PC-9 (cell line): ENCODE measurements at regions of chr20 and their contacts with region 1.

Region 1: DNA sequence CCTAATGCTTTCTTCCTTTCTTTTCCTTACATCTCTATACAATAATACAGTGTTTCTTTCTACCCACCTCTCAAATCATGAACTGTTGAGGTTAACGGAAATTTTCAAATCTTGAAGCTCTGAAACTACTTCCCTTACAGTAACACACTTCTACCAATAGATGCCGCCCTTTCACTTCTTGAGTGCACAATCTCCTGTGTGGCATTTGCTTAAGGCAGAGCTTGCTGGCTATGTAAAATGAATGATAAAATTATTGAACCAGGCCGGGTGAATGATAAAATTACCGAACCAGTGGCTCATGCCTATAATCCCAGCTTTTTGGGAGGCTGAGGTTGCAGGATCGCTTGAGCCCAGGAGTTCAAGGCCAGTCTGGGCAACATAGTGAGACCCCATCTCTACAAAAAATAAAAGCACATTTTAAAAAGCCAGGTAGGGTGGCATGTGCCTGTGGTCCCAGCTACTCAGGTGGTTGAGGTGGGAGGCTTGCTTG is 56.8 kb downstream of the KCNS1 start:
- DNase-seq: peak; percentile 37 to 77
- H3K4me3 ChIP-seq: no peak overlapping the region
- H3K27ac ChIP-seq: no peak overlapping the region
- H3K4me1 ChIP-seq: peaks cover 26% of the 10 kb centered on the region
- H3K27me3 ChIP-seq: no peaks in the 10 kb centered on the region
- CTCF ChIP-seq: peak; percentile 96

Region 2: GRCh38 chr20:44720617-44720993 is 323.5 kb before region 1 on chr20:
- CTCF ChIA-PET with region 1: no interaction called
- POLR2A ChIA-PET with region 1: interaction called, 25 read pairs
- intact Hi-C with region 1: no loop called
- DNase-seq: peak; percentile 71 to 83
- H3K4me3 ChIP-seq: no peak overlapping the region
- H3K27ac ChIP-seq: peak overlapping the region; percentile 40
- H3K4me1 ChIP-seq: peaks cover 22% of the 10 kb centered on the region
- H3K27me3 ChIP-seq: no peaks in the 10 kb centered on the region
- CTCF ChIP-seq: no peak

Region 3: GRCh38 chr20:44997171-44998067 is 46.7 kb before region 1 on chr20:
- CTCF ChIA-PET with region 1: no interaction called
- POLR2A ChIA-PET with region 1: no interaction called
- intact Hi-C with region 1: no loop called
- DNase-seq: no peak
- H3K4me3 ChIP-seq: no peak overlapping the region
- H3K27ac ChIP-seq: no peak overlapping the region
- H3K4me1 ChIP-seq: peaks cover 12% of the 10 kb centered on the region; the same call in 1 of the 2 replicates
- H3K27me3 ChIP-seq: no peaks in the 10 kb centered on the region
- CTCF ChIP-seq: no peak

Region 4: DNA sequence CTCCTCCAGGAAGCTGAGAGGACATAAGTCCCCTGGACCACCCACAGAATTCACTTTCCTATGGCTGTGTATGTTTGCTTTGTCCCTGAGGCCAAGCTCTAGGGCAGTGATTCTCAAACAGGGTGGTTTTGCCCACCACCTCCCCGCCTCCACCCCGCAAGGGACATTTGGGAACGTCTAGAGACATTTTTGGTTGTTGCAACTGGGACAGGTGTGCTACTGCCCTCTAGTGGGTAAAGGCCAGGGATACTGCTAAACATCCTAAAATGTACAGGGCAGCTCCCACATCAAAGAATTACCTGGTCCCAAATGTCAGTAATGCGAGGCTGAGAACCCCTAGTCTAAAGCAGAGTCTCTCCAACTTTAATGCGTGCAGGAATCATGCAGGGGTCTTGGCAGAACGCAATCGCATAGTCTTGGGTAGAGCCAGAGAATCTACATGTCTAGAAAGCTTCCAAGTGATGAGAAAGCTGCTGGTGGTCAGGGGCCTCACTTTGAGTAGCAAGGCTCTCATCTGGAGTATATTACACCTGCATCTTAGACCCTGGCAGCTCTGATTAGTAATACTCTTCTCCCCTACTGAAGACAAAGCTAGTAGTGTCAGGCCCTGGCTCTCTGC is 51.7 kb after region 1 on chr20:
- CTCF ChIA-PET with region 1: interaction called, 31 read pairs
- POLR2A ChIA-PET with region 1: no interaction called
- intact Hi-C with region 1: loop called (anchors 1 kb)
- DNase-seq: peak; percentile 54 to 65
- H3K4me3 ChIP-seq: no peak overlapping the region
- H3K27ac ChIP-seq: no peak overlapping the region
- H3K4me1 ChIP-seq: no peaks in the 10 kb centered on the region
- H3K27me3 ChIP-seq: no peaks in the 10 kb centered on the region
- CTCF ChIP-seq: peak; percentile 91

Region 5: DNA sequence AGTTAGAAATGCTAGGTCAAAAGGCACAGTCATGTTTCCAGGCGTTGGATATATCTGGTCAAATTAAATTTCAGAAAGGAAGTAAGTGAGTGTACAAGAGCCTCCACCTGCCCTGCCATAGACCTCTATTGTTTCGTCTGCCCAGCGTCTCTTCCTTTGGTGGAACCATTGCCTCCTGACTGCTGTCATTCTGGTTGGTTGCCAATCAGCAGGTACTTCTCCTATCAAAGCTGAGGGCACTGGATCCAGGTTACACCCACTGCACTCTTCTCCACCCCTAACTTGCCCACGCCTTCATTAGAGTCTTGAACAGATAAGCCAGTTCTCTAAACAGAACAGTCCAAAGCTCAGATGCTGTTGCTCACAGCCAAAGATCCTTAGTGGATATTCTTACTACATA is 73.5 kb after region 1 on chr20:
- CTCF ChIA-PET with region 1: no interaction called
- POLR2A ChIA-PET with region 1: no interaction called
- intact Hi-C with region 1: no loop called
- DNase-seq: no peak
- H3K4me3 ChIP-seq: no peak overlapping the region
- H3K27ac ChIP-seq: no peak overlapping the region
- H3K4me1 ChIP-seq: no peaks in the 10 kb centered on the region
- H3K27me3 ChIP-seq: no peaks in the 10 kb centered on the region
- CTCF ChIP-seq: no peak

Region 6: DNA sequence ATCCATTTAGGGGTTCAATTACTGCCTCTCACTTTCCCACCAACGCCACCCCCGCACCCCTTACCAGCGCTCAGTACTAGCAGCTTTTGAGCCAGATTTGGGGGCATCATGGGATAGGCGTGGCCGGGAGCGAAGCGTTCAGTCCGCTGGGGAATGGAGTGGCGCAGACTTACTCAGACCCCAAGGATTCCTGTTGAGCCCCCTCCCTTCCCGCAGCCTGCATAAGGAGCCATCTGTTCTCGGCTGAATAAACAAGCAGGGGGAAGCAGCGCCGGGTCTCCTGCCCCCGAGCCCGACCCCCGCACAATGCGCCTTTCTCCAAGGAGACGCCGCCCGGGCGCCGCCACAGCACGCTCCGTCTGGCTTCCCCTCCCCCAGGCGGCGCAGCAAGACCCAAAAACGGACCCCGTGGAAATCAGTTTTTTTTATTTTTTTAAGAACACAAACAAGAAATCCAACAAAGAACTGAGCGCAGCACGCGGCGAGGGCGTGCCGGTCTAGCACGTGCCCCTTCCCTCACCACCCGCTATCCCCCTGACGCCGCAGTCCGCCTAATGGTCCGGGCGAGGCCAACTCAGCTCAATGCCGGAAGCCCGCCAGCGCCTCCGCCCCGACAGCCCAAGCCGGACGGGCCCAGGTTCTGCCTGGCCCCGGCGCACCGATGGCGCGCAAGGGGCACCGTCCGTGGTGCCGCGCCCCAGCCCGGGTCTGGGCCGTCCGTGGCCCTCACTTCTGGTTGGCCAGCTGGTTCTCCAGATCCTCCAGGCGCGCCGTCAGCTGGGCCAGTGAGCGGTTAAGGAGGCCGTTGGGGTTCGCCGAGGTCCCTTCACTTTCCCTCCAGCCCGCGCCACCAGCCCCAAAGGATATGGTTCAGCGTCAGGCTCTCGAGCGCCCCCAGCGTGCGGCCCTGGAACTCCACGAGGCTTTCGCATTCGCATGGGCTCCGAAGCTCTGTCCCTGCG is 249.2 kb after region 1 on chr20:
- CTCF ChIA-PET with region 1: interaction called, 19 read pairs
- POLR2A ChIA-PET with region 1: interaction called, 4 read pairs
- intact Hi-C with region 1: loop called (anchors 1 kb)
- DNase-seq: peak; percentile 61 to 91
- H3K4me3 ChIP-seq: peak overlapping the region; percentile 60
- H3K27ac ChIP-seq: no peak overlapping the region
- H3K4me1 ChIP-seq: peaks cover 15% of the 10 kb centered on the region
- H3K27me3 ChIP-seq: no peaks in the 10 kb centered on the region
- CTCF ChIP-seq: peak; percentile 97

Region 7: DNA sequence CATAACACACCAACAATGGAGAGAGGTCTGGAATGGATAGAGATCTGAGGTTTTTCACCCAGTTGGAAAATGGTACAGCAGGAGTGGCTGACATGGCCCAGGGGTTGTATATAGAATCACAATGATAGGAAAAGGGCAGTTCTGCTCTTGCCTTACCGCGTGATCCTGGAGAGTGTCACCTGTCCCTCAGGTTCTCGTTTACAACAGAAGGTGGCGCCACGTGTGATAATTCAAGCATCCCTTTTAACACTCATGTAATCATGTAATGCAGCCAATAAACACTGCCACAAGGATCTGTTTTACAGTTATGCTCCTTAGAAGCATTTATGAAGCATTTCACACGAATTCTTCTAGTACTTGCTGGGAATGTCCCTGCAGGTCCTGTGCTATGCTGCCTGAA is 412.5 kb after region 1 on chr20:
- CTCF ChIA-PET with region 1: no interaction called
- POLR2A ChIA-PET with region 1: no interaction called
- intact Hi-C with region 1: no loop called
- DNase-seq: peak in 1 of 2 experiments; percentile 39
- H3K4me3 ChIP-seq: no peak overlapping the region
- H3K27ac ChIP-seq: no peak overlapping the region
- H3K4me1 ChIP-seq: peaks cover 14% of the 10 kb centered on the region; the same call in 1 of the 2 replicates
- H3K27me3 ChIP-seq: no peaks in the 10 kb centered on the region
- CTCF ChIP-seq: peak; percentile 53

Region 8: GRCh38 chr20:45779011-45779915 is 735.1 kb after region 1 on chr20:
- CTCF ChIA-PET with region 1: no interaction called
- POLR2A ChIA-PET with region 1: no interaction called
- intact Hi-C with region 1: loop called (anchors 5 kb)
- DNase-seq: peak; percentile 96 to 100
- H3K4me3 ChIP-seq: no peak overlapping the region; the same call in 1 of the 2 replicates
- H3K27ac ChIP-seq: peak overlapping the region; percentile 99
- H3K4me1 ChIP-seq: peaks cover 74% of the 10 kb centered on the region
- H3K27me3 ChIP-seq: no peaks in the 10 kb centered on the region
- CTCF ChIP-seq: no peak